ENCODE measurements at regions of chr20 and their contacts with region 1.

Region 1: DNA sequence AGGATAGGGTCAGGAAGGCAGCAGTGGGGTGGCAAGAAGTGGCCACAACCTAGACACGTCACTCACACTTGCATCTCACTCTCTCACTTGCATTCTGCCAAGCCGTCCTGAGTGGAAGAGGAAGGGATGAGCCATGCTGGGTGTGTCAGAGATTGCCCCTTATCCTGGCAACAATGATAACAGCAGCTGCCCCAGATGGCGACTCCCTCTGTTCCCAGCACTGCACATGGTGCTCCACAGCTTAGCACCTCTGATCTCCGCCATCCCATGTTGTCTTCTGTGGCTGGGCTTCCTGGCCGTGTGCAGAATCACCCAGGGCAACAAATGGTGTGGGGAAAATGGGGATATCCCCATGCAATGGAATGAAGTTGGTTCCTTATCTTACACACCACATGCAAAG is 11.1 kb downstream of the KCNB1 start:
- DNase-seq: no peak
- H3K4me3 ChIP-seq: no peak overlapping the region
- CTCF ChIP-seq: no peak

Region 2: DNA sequence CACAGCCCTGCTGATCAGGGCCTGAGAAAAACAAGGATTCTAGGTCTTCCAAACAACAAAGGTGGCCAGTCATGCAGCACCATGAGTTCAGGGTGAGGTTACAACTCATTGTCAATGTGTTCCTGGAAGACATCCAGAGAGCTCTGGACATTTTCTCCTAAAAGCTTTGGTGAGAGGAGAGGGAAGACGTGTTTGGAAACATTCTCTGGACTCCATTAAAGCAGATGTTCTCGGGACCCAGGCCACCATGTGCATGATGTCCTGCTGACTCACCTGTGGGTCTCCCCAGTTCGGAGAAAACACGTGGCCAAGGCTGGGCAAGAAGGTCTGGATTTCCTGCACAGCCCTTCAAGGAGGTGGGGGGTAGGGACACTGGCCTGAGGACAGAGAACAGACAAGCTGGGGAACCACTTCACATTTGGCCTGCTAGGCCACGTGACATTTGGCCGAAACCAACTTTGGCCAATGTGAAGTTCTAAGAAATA is 50.5 kb before region 1 on chr20:
- in situ Hi-C with region 1: no loop called
- DNase-seq: no peak
- H3K4me3 ChIP-seq: no peak overlapping the region
- CTCF ChIP-seq: no peak

Region 3: GRCh38 chr20:49433333-49433732 is 38.1 kb before region 1 on chr20:
- in situ Hi-C with region 1: loop called (anchors 5 kb)
- DNase-seq: no peak
- H3K4me3 ChIP-seq: no peak overlapping the region
- CTCF ChIP-seq: no peak

Region 4: GRCh38 chr20:49516916-49517789 is 45.8 kb after region 1 on chr20:
- in situ Hi-C with region 1: no loop called
- DNase-seq: no peak
- H3K4me3 ChIP-seq: no peak overlapping the region
- CTCF ChIP-seq: no peak

Region 5: DNA sequence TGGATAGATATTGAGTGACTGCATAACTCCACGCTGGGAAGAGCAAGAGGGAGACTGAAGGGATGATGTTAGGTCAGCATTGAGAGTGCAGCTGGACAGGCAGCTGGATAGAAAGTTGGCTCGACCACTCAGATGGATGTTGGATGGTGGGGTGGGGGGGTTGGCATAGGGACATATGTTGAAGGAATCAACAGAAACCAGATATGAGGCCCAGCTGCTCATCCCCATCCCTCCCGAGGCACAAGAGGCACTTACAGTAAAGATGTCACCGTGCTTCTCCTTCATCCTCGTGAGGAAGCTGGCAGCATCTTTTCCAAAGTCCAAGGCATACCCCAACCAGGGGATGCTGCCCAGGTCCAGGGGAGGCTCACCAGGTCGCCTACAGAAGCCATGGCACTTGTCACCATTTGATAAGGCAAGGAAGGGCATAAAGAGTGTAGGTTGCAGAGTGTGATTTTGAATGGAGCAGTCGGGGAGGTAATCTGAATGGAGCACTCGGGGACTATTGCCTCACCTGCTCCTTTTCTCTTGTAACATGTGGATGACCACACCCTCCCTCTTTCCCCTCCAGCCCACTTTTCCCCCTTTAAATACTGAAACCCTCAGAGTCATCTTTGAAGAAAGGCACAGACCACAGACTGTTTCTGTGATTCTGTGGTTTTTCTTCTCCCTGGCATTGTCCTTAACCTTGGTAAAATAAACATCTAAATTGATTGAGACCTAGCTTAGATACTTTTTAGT is 78.6 kb after region 1 on chr20:
- in situ Hi-C with region 1: no loop called
- DNase-seq: no peak
- H3K4me3 ChIP-seq: no peak overlapping the region
- CTCF ChIP-seq: no peak

Measured in astrocyte of the cerebellum (primary cell).